ENCODE measurements at regions of chr14 and their contacts with region 1.

Region 1: GRCh38 chr14:97707603-97708002 is 910.4 kb downstream of the VRK1 start:
- DNase-seq: peak in 1 of 2 donors; percentile 59
- ATAC-seq: peak; percentile 6 to 21 (median 19)
- H3K4me3 ChIP-seq: no peak overlapping the region
- H3K4me3 Mint-ChIP-seq: peak overlapping the region; percentile 92
- H3K27ac ChIP-seq: peak overlapping the region; percentile 79
- H3K27ac Mint-ChIP-seq: peak overlapping the region; percentile 87 to 88
- H3K4me1 ChIP-seq: peaks cover 62% of the 10 kb centered on the region
- H3K4me1 Mint-ChIP-seq: peaks cover 89 to 98% of the 10 kb centered on the region in 2 donors
- H3K27me3 ChIP-seq: no peaks in the 10 kb centered on the region
- H3K27me3 Mint-ChIP-seq: no peaks in the 10 kb centered on the region
- CTCF ChIP-seq: no peak

Region 2: DNA sequence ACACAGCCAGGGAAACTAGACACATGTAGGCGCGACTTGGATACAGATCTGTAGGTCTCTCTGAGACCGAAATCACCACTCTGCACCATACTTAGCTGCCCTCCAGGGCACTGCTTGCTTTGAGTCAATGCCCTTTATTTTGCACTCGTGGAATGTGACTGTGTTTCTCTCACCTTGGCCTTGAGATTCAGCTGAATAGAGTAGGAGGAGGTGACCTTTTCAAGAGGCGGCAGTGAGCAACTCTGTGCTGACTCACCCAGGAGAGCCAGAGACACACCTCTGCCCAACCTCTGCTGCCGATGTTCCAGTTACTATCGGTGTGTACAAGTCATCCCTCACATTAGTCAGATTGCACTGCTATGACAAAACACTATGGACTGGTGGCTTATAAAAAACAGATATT is 327.1 kb before region 1 on chr14:
- intact Hi-C with region 1: loop called (anchors 5 kb)
- DNase-seq: peak; percentile 16 to 19
- ATAC-seq: peak; percentile 38 to 79 (median 52)
- H3K4me3 ChIP-seq: no peak overlapping the region
- H3K4me3 Mint-ChIP-seq: peak overlapping the region; percentile 86
- H3K27ac ChIP-seq: peak overlapping the region; percentile 43
- H3K27ac Mint-ChIP-seq: peak overlapping the region; percentile 92 to 100
- H3K4me1 ChIP-seq: peaks cover 48% of the 10 kb centered on the region
- H3K4me1 Mint-ChIP-seq: peaks cover 68 to 76% of the 10 kb centered on the region in 2 donors
- H3K27me3 ChIP-seq: no peaks in the 10 kb centered on the region
- H3K27me3 Mint-ChIP-seq: no peaks in the 10 kb centered on the region
- CTCF ChIP-seq: no peak

Region 3: DNA sequence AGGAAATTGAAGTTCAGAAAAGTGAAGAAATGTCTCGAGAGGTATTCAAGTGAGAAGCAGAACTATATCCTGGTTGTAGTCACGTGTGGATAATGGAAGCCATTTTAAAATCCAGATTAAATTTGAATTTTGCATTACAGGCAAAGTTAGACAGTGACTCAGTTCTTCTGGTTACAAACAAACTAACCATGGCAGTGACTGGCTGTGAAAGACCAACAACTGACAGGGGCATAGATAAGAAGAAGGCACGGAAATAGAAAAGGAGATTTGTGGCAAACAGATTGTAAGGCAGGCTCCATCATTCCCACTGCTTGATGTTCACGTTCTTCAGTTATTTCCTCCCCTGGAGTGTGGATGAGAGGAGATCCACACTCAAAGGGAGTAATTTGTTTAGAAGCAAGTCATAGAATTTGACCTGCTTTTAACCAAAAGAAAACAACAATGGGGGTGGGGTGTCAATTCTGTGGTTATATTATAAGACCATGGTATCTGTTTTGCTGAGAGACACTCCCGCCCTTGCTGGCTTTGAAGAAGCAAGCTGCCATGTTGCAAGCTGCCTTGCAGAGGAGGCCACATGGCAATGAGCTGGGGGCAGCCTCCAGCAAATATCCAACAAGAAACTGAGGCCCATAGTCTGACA is 115.1 kb before region 1 on chr14:
- intact Hi-C with region 1: loop called (anchors 2 kb)
- DNase-seq: peak in 1 of 2 donors; percentile 42
- ATAC-seq: peak; percentile 77 to 86 (median 82)
- H3K4me3 ChIP-seq: no peak overlapping the region
- H3K4me3 Mint-ChIP-seq: peak overlapping the region; percentile 75
- H3K27ac ChIP-seq: peak overlapping the region; percentile 60
- H3K27ac Mint-ChIP-seq: peak overlapping the region; percentile 87 to 91
- H3K4me1 ChIP-seq: peaks cover 20% of the 10 kb centered on the region
- H3K4me1 Mint-ChIP-seq: peaks cover 66 to 70% of the 10 kb centered on the region in 2 donors
- H3K27me3 ChIP-seq: no peaks in the 10 kb centered on the region
- H3K27me3 Mint-ChIP-seq: no peaks in the 10 kb centered on the region
- CTCF ChIP-seq: no peak

Region 4: GRCh38 chr14:97788364-97788763 is 80.8 kb after region 1 on chr14:
- intact Hi-C with region 1: loop called (anchors 10 kb)
- DNase-seq: no peak
- ATAC-seq: no peak
- H3K4me3 ChIP-seq: no peak overlapping the region
- H3K4me3 Mint-ChIP-seq: no peak overlapping the region
- H3K27ac ChIP-seq: no peak overlapping the region
- H3K27ac Mint-ChIP-seq: no peak overlapping the region
- H3K4me1 ChIP-seq: no peaks in the 10 kb centered on the region
- H3K4me1 Mint-ChIP-seq: peaks cover 13 to 14% of the 10 kb centered on the region in 2 donors
- H3K27me3 ChIP-seq: no peaks in the 10 kb centered on the region
- H3K27me3 Mint-ChIP-seq: peaks cover 0 to 3% of the 10 kb centered on the region in 2 donors
- CTCF ChIP-seq: no peak

Region 5: DNA sequence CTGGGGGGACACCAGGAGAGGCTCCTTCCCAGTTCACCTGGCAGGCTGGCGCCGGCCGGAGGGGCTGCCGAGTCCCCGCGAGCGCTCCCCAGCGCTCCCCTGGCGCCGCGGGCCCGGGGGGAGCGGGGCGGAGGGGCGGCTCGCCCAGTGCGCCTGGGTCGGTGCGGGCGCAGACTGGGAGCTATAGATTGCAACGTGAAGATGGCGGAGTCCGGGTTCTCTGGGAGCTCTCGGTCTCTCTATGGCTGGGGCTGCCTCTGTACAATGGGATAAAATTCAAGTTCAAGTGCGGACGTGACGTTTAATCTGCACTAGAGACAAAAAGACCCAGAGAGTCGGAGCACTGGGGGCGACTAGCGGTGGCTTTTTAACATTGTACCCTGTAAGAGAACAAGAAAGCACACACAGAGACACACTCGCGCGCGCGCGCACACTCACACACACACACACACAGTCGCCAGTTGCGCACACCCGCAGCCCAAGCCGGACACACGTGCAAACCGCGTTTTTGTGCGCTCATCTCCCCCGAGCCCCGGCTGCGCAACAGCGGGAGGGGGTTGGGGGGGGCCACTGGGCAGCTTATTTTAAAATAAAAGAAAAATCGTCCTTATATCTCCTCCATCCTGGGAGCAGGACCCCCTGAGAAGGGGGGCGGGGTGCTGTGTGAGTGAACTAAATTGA is 1564.5 kb after region 1 on chr14 and contains the start of gene BCL11B:
- intact Hi-C with region 1: loop called (anchors 5 kb)
- DNase-seq: peak; percentile 73 to 96
- ATAC-seq: peak; percentile 71 to 89 (median 78)
- H3K4me3 ChIP-seq: peak within 1 kb of the TSS; percentile 61
- H3K4me3 Mint-ChIP-seq: peak within 1 kb of the TSS; percentile 99
- H3K27ac ChIP-seq: peak within 1 kb of the TSS; percentile 60
- H3K27ac Mint-ChIP-seq: peak within 1 kb of the TSS; percentile 90 to 91
- H3K4me1 ChIP-seq: peaks cover 43% of the 10 kb centered on the region
- H3K4me1 Mint-ChIP-seq: peaks cover 65 to 71% of the 10 kb centered on the region in 2 donors
- H3K27me3 ChIP-seq: no peaks in the 10 kb centered on the region
- H3K27me3 Mint-ChIP-seq: no peaks in the 10 kb centered on the region
- CTCF ChIP-seq: peak; percentile 65
- total RNA-seq, gene BCL11B: 43.5 to 61.5 (median 56.2) TPM

Measured in natural killer cell (primary cell).